Posterior vena cava (tissue), 2 donors: ENCODE measurements at regions of chr4 and their contacts with region 1.

Region 1: DNA sequence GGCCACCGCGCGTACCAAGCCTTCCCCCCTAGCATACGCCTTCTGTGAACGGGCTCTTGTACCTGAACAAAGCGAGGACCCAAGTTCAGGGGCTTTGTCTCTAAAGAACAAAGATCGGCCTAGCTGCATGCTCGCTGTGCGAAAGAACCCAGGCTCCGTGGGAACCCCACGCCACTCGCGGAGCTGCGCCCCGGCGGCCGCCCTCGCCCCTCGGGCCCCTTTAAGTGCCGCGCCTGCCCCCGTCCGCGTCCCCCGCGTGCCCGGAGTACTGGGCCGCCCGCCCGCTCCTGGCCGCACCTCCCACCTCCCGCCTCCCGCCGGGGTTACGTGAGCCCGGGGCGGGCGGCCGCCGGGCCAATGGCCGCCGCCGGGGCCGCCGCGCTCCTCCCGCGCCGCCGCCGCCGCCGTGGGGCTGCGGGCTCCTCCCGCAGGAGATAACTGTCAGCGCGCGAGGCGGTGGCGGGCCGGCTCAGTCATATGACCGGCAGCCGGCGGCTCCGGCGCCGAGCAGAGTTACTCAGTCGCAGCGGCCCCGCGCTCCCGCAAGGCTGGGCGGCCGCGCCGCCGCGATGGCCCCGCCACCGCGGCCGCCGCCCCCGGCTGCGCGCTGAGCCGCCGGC is at the start of gene FNIP2:
- DNase-seq: peak; percentile 93
- total RNA-seq, gene FNIP2: 37.9 to 93.0 TPM

Region 2: GRCh38 chr4:158691750-158692149 is 76.9 kb before region 1 on chr4:
- intact Hi-C with region 1: no loop called
- DNase-seq: no peak

Region 3: DNA sequence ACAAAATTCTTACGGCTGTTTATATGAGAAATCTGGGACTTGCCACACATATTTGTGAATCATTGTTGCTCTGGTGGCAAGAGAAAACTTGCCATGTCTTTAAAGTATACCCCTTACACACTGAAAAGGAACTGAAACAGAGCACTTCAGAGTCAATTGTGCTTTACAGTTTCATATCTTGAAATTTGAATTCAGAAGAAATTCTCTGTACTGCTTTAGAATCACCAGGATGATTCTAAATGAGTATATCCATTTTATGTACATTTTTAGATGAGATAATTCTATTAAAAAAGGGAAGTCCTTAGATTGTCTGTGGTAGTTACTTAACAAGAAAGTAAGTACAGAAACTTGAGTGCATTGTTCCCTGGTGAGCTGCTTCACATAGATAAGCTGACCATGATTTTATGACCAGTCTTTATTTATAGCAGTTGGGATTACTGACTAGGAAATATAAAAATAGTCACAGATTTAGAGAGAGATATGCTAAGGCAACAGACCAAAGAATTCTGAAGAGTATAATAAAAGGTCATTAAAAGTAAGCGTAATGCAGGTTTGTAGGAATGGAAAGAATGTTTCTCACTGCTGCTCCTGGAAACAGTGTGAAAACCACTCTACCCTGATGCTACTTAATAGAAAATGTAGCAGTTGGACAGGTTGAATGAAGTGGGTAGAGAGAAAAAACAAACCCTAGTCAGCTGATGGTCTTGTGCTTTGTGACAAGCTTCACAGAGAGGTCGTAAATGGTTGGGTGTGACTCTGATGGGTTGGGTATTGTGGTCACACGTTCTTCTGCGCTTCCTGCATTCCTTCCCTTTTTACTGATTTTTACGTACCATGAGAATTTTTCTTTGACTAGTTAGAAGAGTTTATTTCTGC is 41.2 kb after region 1 on chr4:
- intact Hi-C with region 1: loop called in 1 of 2 experiments (anchors 5 kb)
- DNase-seq: no peak

Region 4: DNA sequence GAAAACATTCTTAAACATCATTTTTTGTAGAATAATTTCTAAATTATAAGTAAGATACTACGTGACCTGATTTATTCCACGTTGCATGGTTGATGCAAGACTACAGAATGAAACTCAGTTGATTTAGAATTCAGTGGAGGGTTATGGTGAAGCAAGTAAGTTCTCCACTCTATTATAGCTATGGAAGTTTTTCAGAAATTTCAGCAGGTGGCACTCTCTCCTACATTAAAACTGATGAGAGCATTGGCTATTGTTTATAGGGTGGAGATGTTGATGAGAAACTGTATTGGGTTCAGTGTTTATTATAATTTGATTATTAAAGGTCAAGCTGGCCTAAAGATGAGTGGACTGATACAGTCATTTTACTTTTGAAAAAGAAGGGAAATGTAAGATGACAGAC is 88.2 kb after region 1 on chr4:
- intact Hi-C with region 1: no loop called
- DNase-seq: no peak